ENCODE measurements at regions of chr11 and their contacts with region 1.

Region 1: DNA sequence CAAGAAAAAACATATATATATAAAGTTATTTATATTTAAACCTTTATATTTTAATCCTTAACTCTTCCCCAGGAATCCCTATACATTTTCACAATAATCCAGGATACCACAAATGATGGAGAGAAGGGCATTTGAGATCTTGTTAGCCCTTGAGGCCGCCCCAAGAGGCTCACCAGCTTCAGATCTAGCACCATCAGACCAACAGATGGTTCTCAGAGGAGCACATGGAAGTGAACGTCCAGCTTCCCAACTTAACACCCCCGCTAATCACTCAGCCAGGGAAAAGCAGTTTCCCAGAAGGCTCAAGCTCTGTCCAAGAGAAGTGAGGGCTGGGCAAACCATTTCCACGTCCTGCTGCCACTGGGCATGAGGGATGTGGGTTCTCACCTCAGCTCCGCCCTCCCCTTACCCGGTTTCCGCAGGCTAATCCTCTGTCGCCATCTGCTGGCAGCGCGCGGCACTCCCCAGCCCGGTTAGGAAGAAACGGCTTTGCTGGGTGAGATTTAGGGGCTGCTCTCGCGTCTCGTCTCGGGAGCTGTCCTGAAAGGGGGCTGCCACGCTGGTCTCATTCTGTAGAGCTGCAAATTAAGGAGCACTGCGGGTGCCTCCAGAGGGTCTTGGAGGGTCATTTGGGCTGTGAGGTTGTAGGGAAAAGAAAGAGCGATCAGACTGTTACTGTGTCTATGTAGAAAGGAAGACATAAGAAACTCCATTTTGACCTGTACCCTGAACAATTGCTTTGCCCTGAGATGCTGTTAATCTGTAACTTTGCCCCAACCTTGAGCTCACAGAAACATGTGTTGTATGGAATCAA is 6.8 kb upstream of the FAM111A start:
- DNase-seq: peak; percentile 36
- H3K4me3 ChIP-seq: no peak overlapping the region
- H3K27ac ChIP-seq: no peak overlapping the region
- H3K4me1 ChIP-seq: peaks cover 6% of the 10 kb centered on the region
- H3K27me3 ChIP-seq: no peaks in the 10 kb centered on the region
- CTCF ChIP-seq: peak; percentile 99 to 100

Region 2: GRCh38 chr11:58963528-58964104 is 172.2 kb before region 1 on chr11:
- CTCF ChIA-PET with region 1: no interaction called
- dilution Hi-C with region 1: no loop called
- in situ Hi-C with region 1: no loop called
- intact Hi-C with region 1: loop called (anchors 5 kb)
- DNase-seq: peak; percentile 89
- H3K4me3 ChIP-seq: no peak overlapping the region
- H3K27ac ChIP-seq: no peak overlapping the region
- H3K4me1 ChIP-seq: peaks cover 4% of the 10 kb centered on the region
- H3K27me3 ChIP-seq: peaks cover 2% of the 10 kb centered on the region
- CTCF ChIP-seq: no peak

Region 3: GRCh38 chr11:59088162-59088561 is 47.7 kb before region 1 on chr11:
- CTCF ChIA-PET with region 1: no interaction called
- dilution Hi-C with region 1: no loop called
- in situ Hi-C with region 1: no loop called
- intact Hi-C with region 1: no loop called
- DNase-seq: no peak
- H3K4me3 ChIP-seq: no peak overlapping the region
- H3K27ac ChIP-seq: no peak overlapping the region
- H3K4me1 ChIP-seq: no peaks in the 10 kb centered on the region
- H3K27me3 ChIP-seq: no peaks in the 10 kb centered on the region
- CTCF ChIP-seq: no peak